ENCODE measurements at regions of chr9 and their contacts with region 1.

Region 1: GRCh38 chr9:31394015-31394473 is 990.4 kb upstream of the ACO1 start:
- DNase-seq: no peak
- ATAC-seq: no peak
- H3K4me3 ChIP-seq: no peak overlapping the region
- H3K4me3 Mint-ChIP-seq: no peak overlapping the region
- H3K27ac ChIP-seq: no peak overlapping the region
- H3K27ac Mint-ChIP-seq: no peak overlapping the region
- H3K4me1 ChIP-seq: peaks cover 7% of the 10 kb centered on the region
- H3K4me1 Mint-ChIP-seq: peaks cover 18% of the 10 kb centered on the region
- H3K27me3 ChIP-seq: no peaks in the 10 kb centered on the region
- H3K27me3 Mint-ChIP-seq: no peaks in the 10 kb centered on the region
- CTCF ChIP-seq: no peak

Region 2: GRCh38 chr9:31335529-31336234 is 58.4 kb before region 1 on chr9:
- CTCF ChIA-PET with region 1: no interaction called
- POLR2A ChIA-PET with region 1: no interaction called
- intact Hi-C with region 1: no loop called
- DNase-seq: peak in 1 of 9 experiments; percentile 36
- ATAC-seq: peak; percentile 17
- H3K4me3 ChIP-seq: no peak overlapping the region
- H3K4me3 Mint-ChIP-seq: peak overlapping the region; percentile 2
- H3K27ac ChIP-seq: peak overlapping the region; percentile 10 to 44
- H3K27ac Mint-ChIP-seq: peak overlapping the region; percentile 81
- H3K4me1 ChIP-seq: peaks cover 23% of the 10 kb centered on the region
- H3K4me1 Mint-ChIP-seq: peaks cover 24% of the 10 kb centered on the region
- H3K27me3 ChIP-seq: no peaks in the 10 kb centered on the region
- H3K27me3 Mint-ChIP-seq: no peaks in the 10 kb centered on the region
- CTCF ChIP-seq: no peak

Region 3: DNA sequence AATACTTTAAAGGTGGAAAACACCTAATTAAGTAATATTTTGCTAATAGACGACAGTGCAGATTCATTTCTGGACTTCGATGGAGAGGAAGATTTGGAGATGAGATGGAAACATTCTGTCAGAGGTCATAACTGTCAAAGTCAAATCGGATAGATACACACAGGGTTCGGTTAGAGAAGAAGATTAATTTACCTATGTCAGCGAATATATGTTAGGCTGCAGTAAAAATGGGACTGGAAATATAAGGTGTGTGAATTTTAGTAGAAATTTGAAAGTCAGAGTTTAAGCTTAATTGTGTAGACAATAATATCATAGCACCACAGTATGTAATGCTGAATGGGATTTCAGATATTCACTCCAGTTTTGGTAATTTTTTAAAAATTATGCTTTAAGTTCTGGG is 29.9 kb before region 1 on chr9:
- CTCF ChIA-PET with region 1: no interaction called
- POLR2A ChIA-PET with region 1: interaction called, 3 read pairs
- intact Hi-C with region 1: loop called in 1 of 2 experiments (anchors 1 kb)
- DNase-seq: no peak
- ATAC-seq: no peak
- H3K4me3 ChIP-seq: no peak overlapping the region
- H3K4me3 Mint-ChIP-seq: no peak overlapping the region
- H3K27ac ChIP-seq: no peak overlapping the region
- H3K27ac Mint-ChIP-seq: no peak overlapping the region
- H3K4me1 ChIP-seq: no peaks in the 10 kb centered on the region
- H3K4me1 Mint-ChIP-seq: no peaks in the 10 kb centered on the region
- H3K27me3 ChIP-seq: no peaks in the 10 kb centered on the region
- H3K27me3 Mint-ChIP-seq: no peaks in the 10 kb centered on the region
- CTCF ChIP-seq: no peak

Region 4: GRCh38 chr9:31412081-31412480 is 18.0 kb after region 1 on chr9:
- CTCF ChIA-PET with region 1: no interaction called
- POLR2A ChIA-PET with region 1: no interaction called
- intact Hi-C with region 1: no loop called
- DNase-seq: no peak
- ATAC-seq: no peak
- H3K4me3 ChIP-seq: no peak overlapping the region
- H3K4me3 Mint-ChIP-seq: no peak overlapping the region
- H3K27ac ChIP-seq: no peak overlapping the region
- H3K27ac Mint-ChIP-seq: no peak overlapping the region
- H3K4me1 ChIP-seq: no peaks in the 10 kb centered on the region
- H3K4me1 Mint-ChIP-seq: peaks cover 4% of the 10 kb centered on the region
- H3K27me3 ChIP-seq: no peaks in the 10 kb centered on the region
- H3K27me3 Mint-ChIP-seq: no peaks in the 10 kb centered on the region
- CTCF ChIP-seq: no peak

Region 5: GRCh38 chr9:31445960-31446359 is 51.9 kb after region 1 on chr9:
- CTCF ChIA-PET with region 1: no interaction called
- POLR2A ChIA-PET with region 1: no interaction called
- intact Hi-C with region 1: no loop called
- DNase-seq: no peak
- ATAC-seq: no peak
- H3K4me3 ChIP-seq: no peak overlapping the region
- H3K4me3 Mint-ChIP-seq: no peak overlapping the region
- H3K27ac ChIP-seq: no peak overlapping the region
- H3K27ac Mint-ChIP-seq: no peak overlapping the region
- H3K4me1 ChIP-seq: no peaks in the 10 kb centered on the region
- H3K4me1 Mint-ChIP-seq: peaks cover 11% of the 10 kb centered on the region
- H3K27me3 ChIP-seq: no peaks in the 10 kb centered on the region
- H3K27me3 Mint-ChIP-seq: no peaks in the 10 kb centered on the region
- CTCF ChIP-seq: no peak

Measured in CD8-positive, alpha-beta T cell (primary cell).